A549 (cell line): ENCODE measurements at regions of chr6 and their contacts with region 1.

Region 1: DNA sequence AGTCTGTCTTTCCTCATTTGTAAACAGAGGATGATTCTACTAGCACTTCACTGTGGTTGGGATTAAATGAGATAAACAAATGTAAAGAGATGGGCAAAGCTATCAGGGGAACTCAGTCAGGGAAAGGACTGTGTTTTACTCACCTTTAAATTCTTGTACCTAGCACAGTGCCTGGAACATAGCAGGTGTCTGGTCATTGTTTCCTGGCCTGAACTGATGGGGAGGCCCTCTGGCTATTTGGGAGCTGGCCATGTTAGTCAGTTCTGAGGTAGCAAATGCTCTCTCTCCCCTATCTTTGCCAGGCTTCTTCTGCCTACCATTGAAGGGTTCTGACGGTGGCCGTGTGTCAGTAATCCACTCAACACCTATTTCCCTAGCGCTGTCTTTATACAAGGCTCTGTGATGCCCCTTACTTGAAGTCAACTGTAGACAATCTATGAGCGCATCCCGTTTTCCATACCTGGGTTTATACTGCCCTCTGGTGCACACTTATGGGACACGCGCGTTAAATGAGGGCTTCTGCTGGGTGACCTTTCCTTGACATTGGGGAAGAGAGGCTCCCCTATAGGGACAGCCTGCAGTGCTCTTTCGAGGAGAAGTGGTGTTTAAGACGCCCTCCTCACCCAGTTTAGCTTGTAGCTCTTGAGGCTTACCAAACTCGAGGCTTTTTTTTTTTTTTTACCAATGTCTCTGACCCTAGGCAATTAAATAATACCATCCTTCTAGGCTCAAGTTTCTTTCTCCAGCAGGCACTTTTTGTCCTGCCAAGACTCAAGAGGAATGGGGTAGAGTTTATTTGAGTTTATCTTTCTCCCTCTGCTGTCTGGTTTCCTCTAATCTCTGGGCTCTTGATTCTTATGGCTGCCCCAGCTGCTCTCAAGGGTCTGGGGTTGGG is 4.0 kb upstream of the SPATS1 start:
- DNase-seq: peak; percentile 33 to 60
- ATAC-seq: peak; percentile 89 to 92
- H3K4me3 ChIP-seq: no peak overlapping the region
- H3K27ac ChIP-seq: no peak overlapping the region
- H3K4me1 ChIP-seq: no peaks in the 10 kb centered on the region
- CTCF ChIP-seq: peak; percentile 74
- EP300 ChIP-seq: no peak
- POLR2A ChIP-seq: no peak
- RAD21 ChIP-seq: peak; percentile 79 to 87

Region 2: GRCh38 chr6:44078795-44079671 is 259.4 kb before region 1 on chr6:
- CTCF ChIA-PET with region 1: no interaction called
- POLR2A ChIA-PET with region 1: no interaction called
- DNase-seq: peak; percentile 65 to 73
- ATAC-seq: peak; percentile 36 to 69; a peak in 5 of 6 replicates
- H3K4me3 ChIP-seq: no peak overlapping the region
- H3K27ac ChIP-seq: peak overlapping the region; percentile 13 to 57; a peak in 3 of 6 replicates
- H3K4me1 ChIP-seq: peaks cover 18% of the 10 kb centered on the region
- CTCF ChIP-seq: peak; percentile 82
- EP300 ChIP-seq: no peak
- POLR2A ChIP-seq: no peak
- RAD21 ChIP-seq: peak; percentile 93 to 96

Region 3: DNA sequence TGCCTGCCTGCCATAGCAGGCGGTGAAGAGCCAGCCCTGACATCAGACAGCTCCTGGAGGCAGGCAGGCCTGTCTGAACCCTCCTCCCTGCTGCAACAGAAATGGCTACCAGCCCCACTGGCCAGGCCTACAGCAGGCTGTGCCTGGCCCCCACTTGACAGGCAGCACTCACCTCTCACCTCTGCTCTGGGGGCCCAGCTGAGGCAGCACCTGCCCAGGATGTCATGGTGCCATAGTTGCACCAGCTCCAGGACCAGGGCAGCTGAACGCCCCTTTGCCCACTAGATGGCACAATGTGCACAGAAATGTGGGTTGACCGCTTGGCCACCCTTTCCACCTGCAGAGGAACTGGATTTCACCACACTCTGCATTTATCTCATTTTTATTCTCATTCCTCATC is 241.9 kb before region 1 on chr6:
- CTCF ChIA-PET with region 1: interaction called, 13 read pairs
- POLR2A ChIA-PET with region 1: no interaction called
- DNase-seq: peak; percentile 58 to 76
- ATAC-seq: peak; percentile 85 to 90
- H3K4me3 ChIP-seq: no peak overlapping the region
- H3K27ac ChIP-seq: no peak overlapping the region
- H3K4me1 ChIP-seq: no peaks in the 10 kb centered on the region
- CTCF ChIP-seq: peak; percentile 62
- EP300 ChIP-seq: no peak
- POLR2A ChIP-seq: no peak
- RAD21 ChIP-seq: peak; percentile 77 to 87

Region 4: DNA sequence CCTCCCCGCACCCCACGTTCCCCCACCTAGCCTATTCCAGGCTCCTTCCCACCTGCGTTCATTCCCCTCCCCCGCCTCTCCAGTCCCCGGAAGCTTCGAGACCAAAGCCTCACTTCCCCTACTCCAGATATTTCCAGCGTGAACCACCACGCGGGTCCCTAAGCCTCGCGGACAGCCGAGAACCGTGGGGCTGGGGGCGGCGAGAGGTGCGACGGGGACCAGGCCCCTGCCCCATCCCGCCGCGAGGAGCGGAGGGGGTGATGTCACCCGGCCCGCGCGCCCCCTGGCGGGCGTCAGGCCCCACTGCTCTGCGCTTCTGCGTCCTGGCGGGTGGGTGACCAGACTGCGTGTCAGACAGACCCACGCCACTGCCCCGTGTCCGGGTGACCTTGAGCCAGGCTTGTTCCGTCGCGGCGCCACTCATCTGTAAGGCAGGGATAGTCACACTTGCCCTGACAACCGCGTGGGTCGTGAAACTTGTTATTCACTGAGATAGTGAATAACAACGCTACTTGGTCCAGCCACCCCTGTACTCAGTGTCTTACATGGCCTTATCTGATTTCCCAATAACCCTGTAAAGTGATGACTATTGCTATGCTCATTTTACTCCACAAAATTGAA is 100.6 kb before region 1 on chr6:
- CTCF ChIA-PET with region 1: no interaction called
- POLR2A ChIA-PET with region 1: no interaction called
- DNase-seq: peak; percentile 64 to 69
- ATAC-seq: peak; percentile 80 to 87
- H3K4me3 ChIP-seq: peak overlapping the region; percentile 62
- H3K27ac ChIP-seq: peak overlapping the region; percentile 94 to 96
- H3K4me1 ChIP-seq: peaks cover 39% of the 10 kb centered on the region
- CTCF ChIP-seq: peak; percentile 81
- EP300 ChIP-seq: no peak
- POLR2A ChIP-seq: peak; percentile 16; the same call in 1 of the 2 replicates
- RAD21 ChIP-seq: peak; percentile 21 to 52; a peak in 2 of 5 replicates

Region 5: GRCh38 chr6:44297063-44298038 is 41.1 kb before region 1 on chr6:
- CTCF ChIA-PET with region 1: interaction called, 19 read pairs
- POLR2A ChIA-PET with region 1: no interaction called
- DNase-seq: no peak
- ATAC-seq: peak; percentile 65 to 71; a peak in 5 of 6 replicates
- H3K4me3 ChIP-seq: peak overlapping the region; percentile 40
- H3K27ac ChIP-seq: peak overlapping the region in 1 of 2 experiments; percentile 77; a peak in 3 of 6 replicates
- H3K4me1 ChIP-seq: no peaks in the 10 kb centered on the region
- CTCF ChIP-seq: no peak
- EP300 ChIP-seq: no peak
- POLR2A ChIP-seq: 0 out of 2 replicates have a peak, but pooled peaks have one; percentile 19
- RAD21 ChIP-seq: no peak

Region 6: DNA sequence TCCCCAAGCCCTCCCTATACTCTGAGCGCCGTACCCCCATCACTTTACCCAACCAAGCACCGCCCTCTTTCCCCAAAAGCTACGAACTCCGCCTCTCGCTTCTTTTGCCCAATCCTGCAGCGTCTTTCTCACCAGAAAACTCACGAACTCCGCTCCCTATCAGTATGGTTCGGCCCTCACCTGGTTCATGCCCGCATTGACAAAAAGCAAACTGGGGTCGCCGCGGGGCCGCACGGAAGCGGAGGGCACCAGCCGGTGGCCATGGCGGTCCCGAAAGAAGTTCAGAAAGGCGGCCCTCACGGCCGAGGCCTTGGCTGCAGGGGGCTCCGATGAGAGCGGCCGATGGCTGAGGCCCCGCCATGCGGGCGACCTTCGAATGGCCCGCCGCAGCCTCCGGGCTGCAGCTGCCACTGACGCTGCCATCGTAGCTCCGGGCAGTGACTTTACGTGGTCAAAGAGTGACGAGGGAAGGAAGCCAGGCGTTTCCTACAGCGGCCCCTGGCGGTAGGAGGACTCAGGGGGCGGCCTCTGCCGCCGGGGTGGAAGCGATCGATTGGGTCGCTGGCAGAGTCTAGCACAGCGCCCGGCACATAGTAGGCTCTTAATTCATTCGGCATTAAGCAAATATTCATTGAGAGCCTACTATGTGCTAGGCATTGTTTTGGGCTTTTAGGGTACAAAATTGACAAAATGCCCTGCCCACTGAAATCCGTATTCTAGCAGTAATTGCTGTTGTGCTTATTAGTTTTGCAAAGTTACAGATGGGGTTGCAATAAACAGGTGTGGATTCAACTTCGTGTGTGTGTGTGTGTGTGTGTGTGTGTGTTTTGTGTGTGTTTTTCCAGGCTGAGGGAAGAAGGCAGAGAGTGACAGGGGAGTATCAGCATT is 25.3 kb before region 1 on chr6 and contains the start of gene AARS2:
- CTCF ChIA-PET with region 1: interaction called, 29 read pairs
- POLR2A ChIA-PET with region 1: no interaction called
- DNase-seq: peak; percentile 56 to 82
- ATAC-seq: peak; percentile 98 to 99
- H3K4me3 ChIP-seq: peak within 1 kb of the TSS; percentile 76
- H3K27ac ChIP-seq: peak within 1 kb of the TSS; percentile 80 to 99
- H3K4me1 ChIP-seq: peaks cover 7% of the 10 kb centered on the region; the same call in 2 of the 3 replicates
- CTCF ChIP-seq: peak; percentile 79
- EP300 ChIP-seq: no peak
- POLR2A ChIP-seq: peak; percentile 85
- RAD21 ChIP-seq: no peak; a peak in 1 of 5 replicates
- polyA plus RNA-seq, gene AARS2: 4.0 and 4.3 TPM in 2 replicates

Region 7: DNA sequence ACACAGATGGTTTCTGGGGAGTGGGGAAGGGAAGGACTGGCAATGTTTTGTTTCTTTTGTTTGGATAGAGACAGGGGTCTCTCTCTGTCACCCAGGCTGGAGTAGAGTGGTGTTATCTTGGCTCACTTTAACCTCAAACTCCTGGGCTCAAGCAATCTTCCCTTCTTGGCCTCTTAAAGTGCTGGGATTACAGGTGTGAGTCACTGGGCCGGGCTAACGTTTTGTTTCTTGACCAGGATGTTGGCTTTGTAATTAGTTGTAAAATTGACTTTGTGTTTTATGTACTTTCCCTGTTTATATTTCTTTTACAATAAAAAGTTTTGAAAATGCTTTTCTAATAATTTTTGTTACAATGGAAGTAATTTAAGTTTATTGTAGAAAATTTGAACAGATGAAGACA is 14.9 kb after region 1 on chr6:
- CTCF ChIA-PET with region 1: interaction called, 11 read pairs
- POLR2A ChIA-PET with region 1: no interaction called
- DNase-seq: no peak
- ATAC-seq: no peak
- H3K4me3 ChIP-seq: no peak overlapping the region
- H3K27ac ChIP-seq: no peak overlapping the region
- H3K4me1 ChIP-seq: no peaks in the 10 kb centered on the region
- CTCF ChIP-seq: no peak
- EP300 ChIP-seq: no peak
- POLR2A ChIP-seq: no peak
- RAD21 ChIP-seq: no peak

Region 8: DNA sequence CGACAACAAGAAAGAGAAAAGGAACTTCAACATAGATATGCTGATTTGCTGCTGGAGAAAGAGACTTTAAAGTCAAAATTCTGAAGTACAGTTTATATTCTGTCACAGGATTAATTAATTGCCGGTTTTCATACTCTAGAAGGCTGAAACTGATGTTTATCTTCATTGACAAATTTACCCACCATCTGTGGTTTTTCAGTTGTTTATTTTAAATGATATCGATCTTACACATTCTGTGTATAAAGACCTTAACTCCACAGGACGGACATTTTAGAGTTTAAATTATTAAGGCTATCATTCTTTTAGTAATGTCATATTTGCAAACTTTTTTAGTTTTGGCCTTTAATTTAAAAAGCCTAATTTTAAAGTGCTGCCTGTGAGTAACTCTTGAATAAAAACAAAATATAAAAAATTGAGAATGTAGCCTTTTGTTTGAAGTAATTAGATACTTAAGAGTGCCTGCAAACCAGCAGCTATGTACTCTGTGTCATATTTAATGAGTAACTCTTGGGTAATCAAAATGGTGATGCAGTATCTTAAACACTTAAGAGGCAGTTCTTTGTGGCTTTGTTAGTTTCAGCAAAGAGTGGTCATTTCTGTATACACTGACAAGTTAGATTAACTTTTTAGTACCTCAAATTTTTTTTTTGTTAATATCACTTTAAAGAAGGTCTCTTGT is 108.3 kb after region 1 on chr6:
- CTCF ChIA-PET with region 1: no interaction called
- POLR2A ChIA-PET with region 1: no interaction called
- DNase-seq: no peak
- ATAC-seq: no peak
- H3K4me3 ChIP-seq: no peak overlapping the region
- H3K27ac ChIP-seq: no peak overlapping the region; a peak in 1 of 6 replicates
- H3K4me1 ChIP-seq: peaks cover 20% of the 10 kb centered on the region
- CTCF ChIP-seq: no peak
- EP300 ChIP-seq: no peak
- POLR2A ChIP-seq: no peak
- RAD21 ChIP-seq: no peak